HEK293 (cell line): ENCODE measurements at regions of chr19 and their contacts with region 1.

Region 1: GRCh38 chr19:4624733-4625362 is 14.5 kb upstream of the TNFAIP8L1 start:
- H3K4me3 ChIP-seq: no peak overlapping the region
- H3K27ac ChIP-seq: no peak overlapping the region
- H3K4me1 ChIP-seq: no peaks in the 10 kb centered on the region
- CTCF ChIP-seq: peak; percentile 70

Region 2: GRCh38 chr19:4505897-4506744 is 118.7 kb before region 1 on chr19:
- CTCF ChIA-PET with region 1: no interaction called
- POLR2A ChIA-PET with region 1: no interaction called
- H3K4me3 ChIP-seq: no peak overlapping the region
- H3K27ac ChIP-seq: no peak overlapping the region
- H3K4me1 ChIP-seq: no peaks in the 10 kb centered on the region
- CTCF ChIP-seq: no peak

Region 3: DNA sequence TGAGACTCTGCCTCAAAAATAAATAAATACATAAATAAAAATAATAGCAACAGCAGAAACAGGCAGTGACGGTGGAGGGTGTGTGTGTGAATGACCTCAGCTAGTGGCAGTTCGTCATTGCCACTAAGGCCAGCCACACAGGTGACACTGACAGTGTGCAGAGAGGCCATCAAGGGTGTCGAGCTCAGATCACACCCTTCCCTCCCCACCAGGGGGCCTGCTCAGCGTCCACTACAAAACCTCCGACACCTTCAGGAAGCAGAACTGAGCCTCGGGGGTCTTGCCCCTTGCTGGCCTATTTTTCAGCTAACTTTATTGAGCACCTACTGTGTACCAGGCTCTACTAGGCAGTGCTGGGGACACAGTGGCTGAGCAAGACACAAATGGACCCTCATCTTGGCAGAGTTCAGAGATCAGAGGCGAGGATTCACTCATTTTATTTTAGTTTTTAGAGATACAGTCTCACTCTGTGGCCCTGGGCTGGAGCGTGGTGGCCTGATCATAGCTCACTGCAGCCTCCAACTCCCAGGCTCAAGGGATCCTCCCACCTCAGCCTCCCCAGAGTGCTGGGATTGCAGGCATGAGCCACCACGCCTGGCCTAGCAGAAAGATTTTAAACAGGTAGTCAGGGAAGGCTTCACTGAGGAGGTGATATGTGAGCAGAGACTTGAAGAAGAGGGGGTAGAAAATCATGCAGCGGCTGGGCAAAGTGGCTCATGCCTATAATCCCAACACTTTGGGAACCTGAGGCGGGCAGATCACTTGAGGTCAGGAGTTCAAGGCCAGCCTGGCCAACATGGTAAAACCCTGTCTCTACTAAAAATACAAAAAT is 35.1 kb before region 1 on chr19:
- CTCF ChIA-PET with region 1: interaction called, 11 read pairs
- POLR2A ChIA-PET with region 1: no interaction called
- H3K4me3 ChIP-seq: no peak overlapping the region
- H3K27ac ChIP-seq: no peak overlapping the region
- H3K4me1 ChIP-seq: no peaks in the 10 kb centered on the region
- CTCF ChIP-seq: peak; percentile 42; the same call in 1 of the 2 replicates

Region 4: GRCh38 chr19:4791170-4792018 is 166.5 kb after region 1 on chr19 and contains the start of gene FEM1A:
- CTCF ChIA-PET with region 1: no interaction called
- POLR2A ChIA-PET with region 1: no interaction called
- H3K4me3 ChIP-seq: peak within 1 kb of the TSS; percentile 97
- H3K27ac ChIP-seq: peak within 1 kb of the TSS; percentile 88
- H3K4me1 ChIP-seq: no peaks in the 10 kb centered on the region; the same call in 1 of the 2 replicates
- CTCF ChIP-seq: peak; percentile 92

Region 5: GRCh38 chr19:5038631-5039271 is 413.9 kb after region 1 on chr19:
- CTCF ChIA-PET with region 1: no interaction called
- POLR2A ChIA-PET with region 1: no interaction called
- H3K4me3 ChIP-seq: no peak overlapping the region
- H3K27ac ChIP-seq: no peak overlapping the region
- H3K4me1 ChIP-seq: no peaks in the 10 kb centered on the region
- CTCF ChIP-seq: peak; percentile 54; the same call in 1 of the 2 replicates